ENCODE measurements at regions of chr19 and their contacts with region 1.

Region 1: DNA sequence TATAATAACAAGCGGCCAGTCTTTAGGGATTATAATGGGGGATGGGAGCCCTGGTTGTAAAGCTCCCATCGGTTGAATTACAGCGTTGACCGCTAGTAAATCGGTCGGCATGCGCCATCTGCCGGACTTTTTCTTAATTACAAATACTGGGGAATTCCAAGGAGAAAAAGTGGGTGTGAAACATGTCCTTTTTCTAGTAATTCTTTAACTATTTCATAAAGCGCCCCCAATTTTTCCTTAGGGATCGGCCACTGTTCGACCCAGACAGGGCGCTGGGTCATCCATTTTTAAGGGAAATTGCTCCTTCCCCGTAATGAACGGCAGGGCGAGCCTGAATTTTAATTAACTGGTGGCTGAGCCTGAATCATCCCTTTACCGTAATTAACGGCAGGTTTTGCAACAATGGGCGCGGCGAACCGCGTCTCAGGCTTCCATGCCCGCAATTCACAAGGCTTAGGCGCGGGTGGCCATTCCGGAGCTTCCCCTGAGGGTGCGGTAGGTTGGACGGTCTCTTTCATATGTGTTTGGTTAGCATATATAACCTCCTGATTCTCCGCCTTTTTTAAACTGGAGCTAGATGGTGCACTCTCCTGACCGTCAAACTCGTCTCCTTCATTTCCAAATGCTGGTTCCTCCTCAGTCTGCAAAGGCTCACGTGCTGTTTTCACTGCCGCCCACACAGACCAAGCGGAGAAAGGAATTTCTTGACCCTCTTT is 30.2 kb upstream of the EVI5L start:
- DNase-seq: peak; percentile 60 to 81 (median 68)
- ATAC-seq: peak; percentile 76
- H3K4me3 ChIP-seq: no peak overlapping the region
- H3K27ac ChIP-seq: no peak overlapping the region
- H3K4me1 ChIP-seq: peaks cover 9 to 10% of the 10 kb centered on the region in 2 experiments; a peak in 4 of 5 replicates
- H3K27me3 ChIP-seq: peaks cover 4 to 5% of the 10 kb centered on the region in 2 experiments; a peak in 4 of 5 replicates
- CTCF ChIP-seq: peak; percentile 70 to 77 (median 75)
- EP300 ChIP-seq: no peak
- POLR2A ChIP-seq: no peak
- RAD21 ChIP-seq: peak; percentile 50 to 84

Region 2: DNA sequence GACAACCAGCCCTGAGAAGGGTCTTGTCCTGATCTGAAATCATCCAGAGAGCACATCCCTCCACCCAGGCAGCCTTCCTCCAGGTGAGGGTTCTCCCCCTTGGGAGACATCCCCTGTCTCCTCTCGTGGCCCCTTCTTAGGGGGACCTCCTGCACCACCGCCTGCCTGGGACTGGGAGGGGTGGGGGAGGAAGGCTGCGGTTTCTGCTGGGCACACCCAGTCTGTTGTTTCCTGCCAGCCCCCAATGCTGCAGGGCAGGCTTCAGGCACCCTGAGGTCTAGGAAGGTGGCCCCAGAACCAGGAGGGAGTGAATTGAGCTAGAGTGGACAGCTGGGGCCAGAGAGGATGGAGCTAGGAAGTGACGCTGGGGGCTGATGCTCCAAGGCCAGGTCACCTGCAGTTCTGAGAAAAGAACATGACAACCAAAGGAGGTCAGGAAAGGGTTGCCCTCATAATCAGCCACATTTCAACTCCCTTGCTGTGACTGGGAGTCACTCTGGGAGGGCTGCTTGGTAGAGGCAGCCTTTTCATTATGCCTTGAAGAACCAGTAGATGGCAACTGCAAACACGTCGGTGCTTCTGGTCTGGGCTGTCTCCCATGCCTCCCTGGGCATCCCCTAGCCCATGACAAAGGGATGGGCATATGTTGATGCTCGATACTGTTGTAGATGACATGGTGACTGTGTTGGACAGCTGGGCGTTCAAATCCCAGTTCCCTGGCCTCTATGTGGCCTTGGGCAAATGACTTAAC is 449.7 kb before region 1 on chr19:
- CTCF ChIA-PET with region 1: interaction called, 10 read pairs
- POLR2A ChIA-PET with region 1: no interaction called
- in situ Hi-C with region 1: loop called (anchors 10 kb)
- intact Hi-C with region 1: no loop called
- DNase-seq: no peak
- ATAC-seq: no peak
- H3K4me3 ChIP-seq: no peak overlapping the region
- H3K27ac ChIP-seq: no peak overlapping the region
- H3K4me1 ChIP-seq: no peaks in the 10 kb centered on the region
- H3K27me3 ChIP-seq: peaks cover 6 to 36% of the 10 kb centered on the region in 2 experiments; a peak in 3 of 5 replicates
- CTCF ChIP-seq: no peak
- EP300 ChIP-seq: no peak
- POLR2A ChIP-seq: no peak
- RAD21 ChIP-seq: no peak

Region 3: GRCh38 chr19:7355151-7355820 is 444.5 kb before region 1 on chr19:
- CTCF ChIA-PET with region 1: interaction called, 10 read pairs
- POLR2A ChIA-PET with region 1: interaction called, 3 read pairs
- in situ Hi-C with region 1: loop called (anchors 10 kb)
- intact Hi-C with region 1: loop called (anchors 10 kb)
- DNase-seq: no peak
- ATAC-seq: no peak
- H3K4me3 ChIP-seq: no peak overlapping the region
- H3K27ac ChIP-seq: no peak overlapping the region
- H3K4me1 ChIP-seq: no peaks in the 10 kb centered on the region
- H3K27me3 ChIP-seq: peaks cover 0 to 18% of the 10 kb centered on the region in 2 experiments; a peak in 2 of 5 replicates
- CTCF ChIP-seq: no peak
- EP300 ChIP-seq: no peak
- POLR2A ChIP-seq: no peak
- RAD21 ChIP-seq: no peak

Region 4: GRCh38 chr19:7366701-7367420 is 432.9 kb before region 1 on chr19:
- CTCF ChIA-PET with region 1: no interaction called
- POLR2A ChIA-PET with region 1: no interaction called
- in situ Hi-C with region 1: no loop called
- intact Hi-C with region 1: loop called (anchors 10 kb)
- DNase-seq: peak; percentile 48 to 66 (median 56)
- ATAC-seq: peak; percentile 60
- H3K4me3 ChIP-seq: no peak overlapping the region
- H3K27ac ChIP-seq: no peak overlapping the region
- H3K4me1 ChIP-seq: no peaks in the 10 kb centered on the region; a peak in 1 of 5 replicates
- H3K27me3 ChIP-seq: peaks cover 12 to 33% of the 10 kb centered on the region in 2 experiments; a peak in 3 of 5 replicates
- CTCF ChIP-seq: peak; percentile 45 to 69 (median 57)
- EP300 ChIP-seq: no peak
- POLR2A ChIP-seq: no peak
- RAD21 ChIP-seq: peak in 1 of 2 experiments; percentile 71; a peak in 3 of 4 replicates

Region 5: GRCh38 chr19:7562646-7563393 is 237.0 kb before region 1 on chr19:
- CTCF ChIA-PET with region 1: interaction called, 19 read pairs
- POLR2A ChIA-PET with region 1: interaction called, 3 read pairs
- in situ Hi-C with region 1: no loop called
- intact Hi-C with region 1: loop called (anchors 1 kb)
- DNase-seq: peak; percentile 56 to 76 (median 70)
- ATAC-seq: peak; percentile 63; the same call in 1 of the 3 replicates
- H3K4me3 ChIP-seq: no peak overlapping the region
- H3K27ac ChIP-seq: no peak overlapping the region
- H3K4me1 ChIP-seq: peaks cover 0 to 9% of the 10 kb centered on the region in 2 experiments; a peak in 2 of 5 replicates
- H3K27me3 ChIP-seq: no peaks in the 10 kb centered on the region; a peak in 1 of 5 replicates
- CTCF ChIP-seq: no peak
- EP300 ChIP-seq: no peak
- POLR2A ChIP-seq: no peak
- RAD21 ChIP-seq: no peak

Region 6: GRCh38 chr19:7595466-7596133 is 204.2 kb before region 1 on chr19 and contains the start of gene CAMSAP3:
- CTCF ChIA-PET with region 1: no interaction called
- POLR2A ChIA-PET with region 1: no interaction called
- in situ Hi-C with region 1: no loop called
- intact Hi-C with region 1: no loop called
- DNase-seq: peak; percentile 54 to 92 (median 73)
- ATAC-seq: peak; percentile 92
- H3K4me3 ChIP-seq: peak within 1 kb of the TSS; percentile 30
- H3K27ac ChIP-seq: no peak within 1 kb of the TSS
- H3K4me1 ChIP-seq: peaks cover 0 to 18% of the 10 kb centered on the region in 2 experiments; a peak in 2 of 5 replicates
- H3K27me3 ChIP-seq: peaks cover 21 to 42% of the 10 kb centered on the region in 2 experiments; a peak in 4 of 5 replicates
- CTCF ChIP-seq: no peak
- EP300 ChIP-seq: no peak
- POLR2A ChIP-seq: no peak
- RAD21 ChIP-seq: no peak
- polyA plus RNA-seq, gene CAMSAP3: 0.01 TPM in 1 of 2 experiments, not detected in the other

Region 7: GRCh38 chr19:7680606-7681339 is 119.0 kb before region 1 on chr19 and contains the start of gene TRAPPC5:
- CTCF ChIA-PET with region 1: interaction called, 6 read pairs
- POLR2A ChIA-PET with region 1: no interaction called
- in situ Hi-C with region 1: no loop called
- intact Hi-C with region 1: loop called (anchors 2 kb)
- DNase-seq: peak; percentile 89 to 96 (median 94)
- ATAC-seq: peak; percentile 86
- H3K4me3 ChIP-seq: peak within 1 kb of the TSS; percentile 95
- H3K27ac ChIP-seq: peak within 1 kb of the TSS; percentile 79
- H3K4me1 ChIP-seq: peaks cover 10 to 26% of the 10 kb centered on the region in 2 experiments; a peak in 4 of 5 replicates
- H3K27me3 ChIP-seq: 0 out of 5 replicates have a peak, but pooled peaks cover 0 to 8% of the 10 kb centered on the region in 2 experiments
- CTCF ChIP-seq: peak; percentile 84 to 94 (median 92)
- EP300 ChIP-seq: no peak
- POLR2A ChIP-seq: peak; percentile 58; the same call in 1 of the 2 replicates
- RAD21 ChIP-seq: peak; percentile 97 to 98
- polyA plus RNA-seq, gene TRAPPC5: 2.0 to 4.2 TPM

Measured in K562 (cell line).